HCT116 (cell line): ENCODE measurements at regions of chr4 and their contacts with region 1.

Region 1: DNA sequence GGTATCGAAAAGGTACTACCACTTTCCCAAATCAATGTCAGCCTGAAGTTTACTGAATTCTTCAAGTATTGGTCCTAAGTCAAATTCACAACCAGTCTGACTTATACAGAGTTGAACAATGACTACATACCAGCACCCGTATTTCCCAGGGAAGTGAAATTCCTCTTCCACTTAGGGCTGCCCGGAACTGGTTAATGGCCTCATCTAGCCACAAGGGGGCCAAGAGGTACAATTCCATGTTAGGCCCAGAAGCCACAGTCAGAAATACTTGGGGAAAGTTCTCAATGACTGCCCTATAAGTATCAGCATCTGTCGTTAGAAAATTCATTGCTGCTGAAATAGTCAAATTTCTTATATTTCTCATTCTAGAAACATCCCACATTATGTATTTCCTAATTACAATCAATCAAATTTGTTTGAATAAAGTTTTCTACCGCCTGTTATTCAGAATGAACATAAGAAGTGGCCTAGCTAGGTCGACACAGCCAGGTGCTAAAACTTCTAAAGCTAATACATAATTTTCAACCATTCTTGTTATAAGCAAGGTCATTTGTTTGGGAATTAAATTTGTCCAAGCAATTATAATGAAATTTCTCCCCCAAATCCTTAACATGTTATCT is 5.7 kb upstream of the PCDH7 start:
- DNase-seq: peak; percentile 73
- ATAC-seq: peak; percentile 75
- H3K4me3 ChIP-seq: no peak overlapping the region
- H3K27ac ChIP-seq: peak overlapping the region; percentile 86
- H3K4me1 ChIP-seq: peaks cover 25 to 36% of the 10 kb centered on the region in 2 experiments
- H3K27me3 ChIP-seq: no peaks in the 10 kb centered on the region
- CTCF ChIP-seq: peak; percentile 32 to 82 (median 81); a peak in 5 of 6 replicates
- POLR2A ChIP-seq: no peak
- RAD21 ChIP-seq: peak; percentile 72

Region 2: GRCh38 chr4:30789219-30789671 is 74.7 kb after region 1 on chr4:
- CTCF ChIA-PET with region 1: no interaction called
- POLR2A ChIA-PET with region 1: no interaction called
- RAD21 ChIA-PET with region 1: no interaction called
- intact Hi-C with region 1: loop called (anchors 10 kb)
- DNase-seq: peak; percentile 92
- ATAC-seq: peak; percentile 78
- H3K4me3 ChIP-seq: peak overlapping the region in 1 of 2 experiments; percentile 11; a peak in 1 of 4 replicates
- H3K27ac ChIP-seq: peak overlapping the region; percentile 100
- H3K4me1 ChIP-seq: peaks cover 77 to 100% of the 10 kb centered on the region in 2 experiments
- H3K27me3 ChIP-seq: no peaks in the 10 kb centered on the region
- CTCF ChIP-seq: no peak
- POLR2A ChIP-seq: no peak
- RAD21 ChIP-seq: peak; percentile 28

Region 3: GRCh38 chr4:30863021-30863420 is 148.5 kb after region 1 on chr4:
- CTCF ChIA-PET with region 1: no interaction called
- POLR2A ChIA-PET with region 1: no interaction called
- RAD21 ChIA-PET with region 1: no interaction called
- intact Hi-C with region 1: loop called (anchors 2 kb)
- DNase-seq: no peak
- ATAC-seq: no peak
- H3K4me3 ChIP-seq: no peak overlapping the region
- H3K27ac ChIP-seq: peak overlapping the region; percentile 100
- H3K4me1 ChIP-seq: peaks cover 90 to 100% of the 10 kb centered on the region in 2 experiments
- H3K27me3 ChIP-seq: no peaks in the 10 kb centered on the region
- CTCF ChIP-seq: no peak
- POLR2A ChIP-seq: no peak
- RAD21 ChIP-seq: peak; percentile 34; the same call in 1 of the 2 replicates

Region 4: GRCh38 chr4:31037703-31038102 is 323.2 kb after region 1 on chr4:
- CTCF ChIA-PET with region 1: no interaction called
- POLR2A ChIA-PET with region 1: interaction called, 3 read pairs
- RAD21 ChIA-PET with region 1: interaction called in 1 of 2 experiments, 3 read pairs
- intact Hi-C with region 1: loop called (anchors 5 kb)
- DNase-seq: no peak
- ATAC-seq: no peak
- H3K4me3 ChIP-seq: no peak overlapping the region
- H3K27ac ChIP-seq: peak overlapping the region; percentile 86
- H3K4me1 ChIP-seq: peaks cover 89 to 97% of the 10 kb centered on the region in 2 experiments
- H3K27me3 ChIP-seq: no peaks in the 10 kb centered on the region
- CTCF ChIP-seq: no peak
- POLR2A ChIP-seq: no peak
- RAD21 ChIP-seq: no peak

Region 5: DNA sequence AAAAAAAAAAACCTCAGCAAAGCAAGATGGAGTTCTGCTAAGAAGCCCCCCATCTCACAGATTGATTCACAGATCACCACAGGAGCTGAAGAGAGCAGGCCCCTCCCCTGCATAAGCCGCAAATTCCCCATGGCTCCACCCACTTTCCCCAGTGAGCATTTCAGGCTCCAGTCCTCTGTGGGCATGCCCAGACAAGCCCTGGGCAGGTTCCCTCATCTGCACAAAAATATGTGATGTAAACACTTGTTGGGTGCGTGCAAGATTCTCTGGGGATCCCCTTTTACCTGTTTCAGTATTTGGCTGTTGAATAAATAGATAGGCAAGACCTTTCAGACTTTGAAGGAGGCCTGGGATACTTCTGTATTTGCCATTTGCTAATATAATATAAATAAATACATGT is 520.0 kb after region 1 on chr4:
- CTCF ChIA-PET with region 1: no interaction called
- POLR2A ChIA-PET with region 1: no interaction called
- RAD21 ChIA-PET with region 1: no interaction called
- intact Hi-C with region 1: loop called (anchors 10 kb)
- DNase-seq: peak; percentile 45
- ATAC-seq: peak; percentile 71
- H3K4me3 ChIP-seq: no peak overlapping the region
- H3K27ac ChIP-seq: peak overlapping the region; percentile 89
- H3K4me1 ChIP-seq: peaks cover 52 to 66% of the 10 kb centered on the region in 2 experiments
- H3K27me3 ChIP-seq: no peaks in the 10 kb centered on the region
- CTCF ChIP-seq: no peak
- POLR2A ChIP-seq: no peak
- RAD21 ChIP-seq: no peak; the same call in 1 of the 2 replicates

Region 6: GRCh38 chr4:31374256-31374960 is 659.9 kb after region 1 on chr4:
- CTCF ChIA-PET with region 1: no interaction called
- POLR2A ChIA-PET with region 1: no interaction called
- RAD21 ChIA-PET with region 1: no interaction called
- intact Hi-C with region 1: no loop called
- DNase-seq: no peak
- ATAC-seq: no peak
- H3K4me3 ChIP-seq: no peak overlapping the region
- H3K27ac ChIP-seq: no peak overlapping the region
- H3K4me1 ChIP-seq: no peaks in the 10 kb centered on the region
- H3K27me3 ChIP-seq: no peaks in the 10 kb centered on the region
- CTCF ChIP-seq: no peak
- POLR2A ChIP-seq: no peak
- RAD21 ChIP-seq: no peak